SK-N-SH (cell line): ENCODE measurements at regions of chr14 and their contacts with region 1.

Region 1: GRCh38 chr14:76904740-76905438 is 78.7 kb downstream of the LRRC74A start:
- DNase-seq: peak; percentile 78
- H3K4me3 ChIP-seq: peak overlapping the region in 1 of 2 experiments; percentile 34; a peak in 2 of 4 replicates
- H3K27ac ChIP-seq: peak overlapping the region; percentile 55 to 85
- H3K4me1 ChIP-seq: peaks cover 19 to 24% of the 10 kb centered on the region in 2 experiments; a peak in 2 of 4 replicates
- H3K27me3 ChIP-seq: no peaks in the 10 kb centered on the region
- CTCF ChIP-seq: no peak
- EP300 ChIP-seq: peak; percentile 31 to 46; a peak in 2 of 4 replicates
- RAD21 ChIP-seq: no peak

Region 2: DNA sequence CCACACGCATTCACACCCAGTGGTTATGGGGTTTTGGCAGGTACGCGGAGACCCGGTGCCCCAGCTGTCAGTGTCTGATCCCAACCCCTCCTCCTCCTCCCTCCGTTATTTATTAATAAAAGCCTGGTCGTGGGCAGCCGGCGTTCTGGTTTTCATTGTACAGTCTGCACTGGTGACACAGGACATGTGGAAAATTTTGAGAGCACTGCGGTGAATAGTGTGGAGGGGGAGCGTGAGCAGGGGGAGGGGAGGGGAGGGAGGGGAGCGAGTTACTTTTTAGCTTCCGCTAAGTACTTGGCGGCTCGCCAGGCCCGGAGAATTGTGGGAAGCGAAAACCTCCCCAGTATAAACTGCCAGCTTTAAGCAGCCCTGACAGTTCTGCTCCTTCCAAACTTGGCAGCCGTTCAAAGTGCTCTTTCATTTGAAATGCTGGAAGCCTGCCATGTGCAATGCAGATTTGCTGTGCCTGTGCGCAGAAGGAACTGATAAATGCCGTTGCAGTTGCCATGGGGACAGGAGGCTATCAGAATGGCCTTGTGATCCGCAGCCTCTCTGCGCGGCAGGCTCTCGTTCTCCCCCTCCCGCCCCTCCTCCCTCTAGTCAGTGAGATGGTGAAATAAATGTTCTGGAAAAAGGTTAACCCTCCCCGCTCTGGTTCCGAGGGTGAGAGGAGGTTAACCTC is 135.3 kb after region 1 on chr14:
- CTCF ChIA-PET with region 1: interaction called, 484 read pairs
- POLR2A ChIA-PET with region 1: interaction called, 3 read pairs
- DNase-seq: peak; percentile 86
- H3K4me3 ChIP-seq: peak overlapping the region; percentile 34 to 48
- H3K27ac ChIP-seq: peak overlapping the region; percentile 99 to 100
- H3K4me1 ChIP-seq: peaks cover 76 to 84% of the 10 kb centered on the region in 2 experiments
- H3K27me3 ChIP-seq: no peaks in the 10 kb centered on the region
- CTCF ChIP-seq: no peak
- EP300 ChIP-seq: peak; percentile 91
- RAD21 ChIP-seq: peak; percentile 25

Region 3: GRCh38 chr14:77067632-77068514 is 163.0 kb after region 1 on chr14:
- CTCF ChIA-PET with region 1: interaction called, 339 read pairs
- POLR2A ChIA-PET with region 1: no interaction called
- DNase-seq: peak; percentile 84
- H3K4me3 ChIP-seq: no peak overlapping the region; a peak in 1 of 4 replicates
- H3K27ac ChIP-seq: no peak overlapping the region
- H3K4me1 ChIP-seq: peaks cover 0 to 14% of the 10 kb centered on the region in 2 experiments; a peak in 2 of 4 replicates
- H3K27me3 ChIP-seq: no peaks in the 10 kb centered on the region
- CTCF ChIP-seq: peak; percentile 92
- EP300 ChIP-seq: no peak
- RAD21 ChIP-seq: peak; percentile 95